ENCODE measurements at regions of chr3 and their contacts with region 1.

Region 1: GRCh38 chr3:119559441-119559963 is at the start of gene CD80:
- DNase-seq: peak; percentile 58
- ATAC-seq: peak; percentile 54
- H3K4me3 Mint-ChIP-seq: peak within 1 kb of the TSS; percentile 90
- H3K27ac Mint-ChIP-seq: peak within 1 kb of the TSS; percentile 88
- H3K4me1 Mint-ChIP-seq: peaks cover 92% of the 10 kb centered on the region
- H3K27me3 Mint-ChIP-seq: no peaks in the 10 kb centered on the region
- CTCF ChIP-seq: no peak
- total RNA-seq, gene CD80: 71.4 and 88.1 TPM in 2 replicates

Region 2: GRCh38 chr3:119322835-119323722 is 236.4 kb before region 1 on chr3:
- CTCF ChIA-PET with region 1: no interaction called
- POLR2A ChIA-PET with region 1: interaction called, 4 read pairs
- intact Hi-C with region 1: loop called (anchors 2 kb)
- DNase-seq: peak; percentile 96
- ATAC-seq: peak; percentile 87
- H3K4me3 Mint-ChIP-seq: peak overlapping the region; percentile 87
- H3K27ac Mint-ChIP-seq: peak overlapping the region; percentile 94
- H3K4me1 Mint-ChIP-seq: peaks cover 59% of the 10 kb centered on the region
- H3K27me3 Mint-ChIP-seq: no peaks in the 10 kb centered on the region
- CTCF ChIP-seq: no peak

Region 3: DNA sequence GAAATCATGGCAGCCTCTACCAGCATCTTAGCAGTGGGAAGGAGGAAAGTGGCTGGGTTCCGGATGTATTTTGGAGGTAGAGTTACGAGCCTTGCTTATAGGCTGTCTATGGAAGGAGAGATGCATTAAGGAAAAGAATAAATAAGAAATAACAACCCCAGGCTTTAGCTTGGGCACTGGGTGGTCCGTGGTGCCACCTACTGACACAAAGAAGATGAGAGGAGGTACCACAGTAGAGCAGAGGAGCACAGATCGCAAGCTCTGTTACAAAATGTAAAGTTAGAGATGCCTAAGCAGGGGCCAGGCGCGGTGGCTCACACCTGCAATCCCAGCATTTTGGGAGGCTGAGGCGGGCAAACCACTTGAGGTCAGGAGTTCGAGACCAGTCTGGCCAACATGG is 170.9 kb before region 1 on chr3:
- CTCF ChIA-PET with region 1: no interaction called
- POLR2A ChIA-PET with region 1: no interaction called
- intact Hi-C with region 1: no loop called
- DNase-seq: no peak
- ATAC-seq: no peak
- H3K4me3 Mint-ChIP-seq: no peak overlapping the region
- H3K27ac Mint-ChIP-seq: no peak overlapping the region
- H3K4me1 Mint-ChIP-seq: no peaks in the 10 kb centered on the region
- H3K27me3 Mint-ChIP-seq: no peaks in the 10 kb centered on the region
- CTCF ChIP-seq: no peak

Region 4: DNA sequence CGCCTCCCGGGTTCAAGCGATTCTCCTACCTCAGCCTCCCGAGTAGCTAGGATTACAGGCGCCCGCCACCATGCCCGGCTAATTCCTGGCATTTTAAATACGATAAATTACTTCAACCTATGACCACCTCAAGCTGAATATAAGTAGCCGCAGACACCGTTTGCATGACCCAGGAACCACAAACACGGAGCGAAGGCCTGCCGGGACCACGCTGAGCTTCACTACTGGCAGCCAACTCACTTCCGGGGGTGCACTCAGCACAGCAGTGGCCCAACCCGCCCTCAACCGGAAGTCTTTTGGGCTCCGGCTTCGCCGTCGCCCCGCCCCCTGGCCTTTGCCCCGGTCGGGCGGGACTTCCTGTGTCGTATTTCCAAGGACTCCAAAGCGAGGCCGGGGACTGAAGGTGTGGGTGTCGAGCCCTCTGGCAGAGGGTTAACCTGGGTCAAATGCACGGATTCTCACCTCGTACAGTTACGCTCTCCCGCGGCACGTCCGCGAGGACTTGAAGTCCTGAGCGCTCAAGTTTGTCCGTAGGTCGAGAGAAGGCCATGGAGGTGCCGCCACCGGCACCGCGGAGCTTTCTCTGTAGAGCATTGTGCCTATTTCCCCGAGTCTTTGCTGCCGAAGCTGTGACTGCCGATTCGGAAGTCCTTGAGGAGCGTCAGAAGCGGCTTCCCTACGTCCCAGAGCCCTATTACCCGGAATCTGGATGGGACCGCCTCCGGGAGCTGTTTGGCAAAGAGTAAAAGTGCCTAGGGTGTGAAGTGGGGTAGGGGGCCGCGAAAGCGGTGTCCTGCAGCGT is 61.1 kb before region 1 on chr3 and contains the start of gene TIMMDC1:
- CTCF ChIA-PET with region 1: interaction called, 20 read pairs
- POLR2A ChIA-PET with region 1: interaction called, 18 read pairs
- intact Hi-C with region 1: loop called (anchors 1 kb)
- DNase-seq: peak; percentile 96
- ATAC-seq: peak; percentile 98
- H3K4me3 Mint-ChIP-seq: peak within 1 kb of the TSS; percentile 99
- H3K27ac Mint-ChIP-seq: peak within 1 kb of the TSS; percentile 97
- H3K4me1 Mint-ChIP-seq: peaks cover 38% of the 10 kb centered on the region
- H3K27me3 Mint-ChIP-seq: no peaks in the 10 kb centered on the region
- CTCF ChIP-seq: no peak
- total RNA-seq, gene TIMMDC1: 73.0 and 76.1 TPM in 2 replicates

Region 5: GRCh38 chr3:119579366-119580165 is 20.1 kb after region 1 on chr3 and contains the start of gene ADPRH:
- CTCF ChIA-PET with region 1: interaction called, 12 read pairs
- POLR2A ChIA-PET with region 1: interaction called, 44 read pairs
- intact Hi-C with region 1: loop called (anchors 1 kb)
- DNase-seq: peak; percentile 76
- ATAC-seq: peak; percentile 76
- H3K4me3 Mint-ChIP-seq: peak within 1 kb of the TSS; percentile 97
- H3K27ac Mint-ChIP-seq: peak within 1 kb of the TSS; percentile 99
- H3K4me1 Mint-ChIP-seq: peaks cover 37% of the 10 kb centered on the region
- H3K27me3 Mint-ChIP-seq: no peaks in the 10 kb centered on the region
- CTCF ChIP-seq: no peak
- total RNA-seq, gene ADPRH: 41.2 and 43.8 TPM in 2 replicates

Region 6: GRCh38 chr3:119662604-119663373 is 103.3 kb after region 1 on chr3:
- CTCF ChIA-PET with region 1: interaction called, 3 read pairs
- POLR2A ChIA-PET with region 1: interaction called, 10 read pairs
- intact Hi-C with region 1: no loop called
- DNase-seq: no peak
- ATAC-seq: no peak
- H3K4me3 Mint-ChIP-seq: no peak overlapping the region
- H3K27ac Mint-ChIP-seq: peak overlapping the region; percentile 67
- H3K4me1 Mint-ChIP-seq: peaks cover 68% of the 10 kb centered on the region
- H3K27me3 Mint-ChIP-seq: no peaks in the 10 kb centered on the region
- CTCF ChIP-seq: no peak

Region 7: DNA sequence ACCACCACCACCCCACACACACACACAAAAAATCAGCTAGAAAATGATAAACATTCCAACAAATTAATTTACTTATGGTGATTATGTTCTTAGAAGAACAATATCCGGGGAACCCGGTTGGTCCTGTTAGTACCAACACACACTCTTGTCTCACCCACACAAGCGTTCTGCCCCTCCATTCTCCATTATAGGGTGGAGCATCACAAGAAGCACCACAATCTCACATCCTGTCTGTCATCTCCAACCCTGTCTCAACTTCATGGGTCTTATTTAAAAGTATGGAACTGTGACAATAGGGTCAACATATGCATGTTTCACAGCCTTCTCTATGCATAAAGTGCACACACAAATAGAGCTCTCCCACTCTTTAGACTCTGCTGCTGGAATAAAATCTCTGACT is 529.1 kb after region 1 on chr3:
- CTCF ChIA-PET with region 1: no interaction called
- POLR2A ChIA-PET with region 1: no interaction called
- intact Hi-C with region 1: no loop called
- DNase-seq: no peak
- ATAC-seq: no peak
- H3K4me3 Mint-ChIP-seq: no peak overlapping the region
- H3K27ac Mint-ChIP-seq: no peak overlapping the region
- H3K4me1 Mint-ChIP-seq: peaks cover 27% of the 10 kb centered on the region
- H3K27me3 Mint-ChIP-seq: no peaks in the 10 kb centered on the region
- CTCF ChIP-seq: no peak